Breast epithelium (tissue), 4 donors: ENCODE measurements at regions of chr12 and their contacts with region 1.

Region 1: GRCh38 chr12:95998611-95999286 is 2.6 kb upstream of the HAL start:
- DNase-seq: no peak
- H3K4me3 ChIP-seq: no peak overlapping the region
- H3K27ac ChIP-seq: no peak overlapping the region
- H3K4me1 ChIP-seq: no peaks in the 10 kb centered on the region
- H3K27me3 ChIP-seq: no peaks in the 10 kb centered on the region
- CTCF ChIP-seq: peak; percentile 22 to 65 (median 61)
- POLR2A ChIP-seq: no peak

Region 2: DNA sequence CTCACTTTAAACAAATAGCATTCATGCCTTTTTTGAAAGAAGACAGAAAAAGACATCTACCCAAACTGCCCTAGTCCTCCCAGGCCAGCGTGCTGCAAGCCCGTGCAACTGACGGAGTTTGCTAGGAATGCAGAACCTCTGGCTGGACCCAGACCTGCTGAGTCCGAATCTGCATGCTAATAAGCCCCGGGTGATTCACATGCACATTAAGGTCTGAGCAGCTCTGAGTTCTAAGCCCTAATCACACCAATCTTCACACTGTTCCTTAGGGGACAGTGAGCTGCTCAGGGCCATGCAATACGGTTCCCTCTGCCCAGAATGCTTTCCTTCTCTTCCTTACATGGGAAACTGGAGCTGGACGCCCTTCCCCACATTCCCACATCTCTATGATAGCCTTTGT is 27.8 kb before region 1 on chr12:
- intact Hi-C with region 1: loop called (anchors 2 kb)
- DNase-seq: no peak
- H3K4me3 ChIP-seq: no peak overlapping the region
- H3K27ac ChIP-seq: no peak overlapping the region
- H3K4me1 ChIP-seq: no peaks in the 10 kb centered on the region
- H3K27me3 ChIP-seq: no peaks in the 10 kb centered on the region
- CTCF ChIP-seq: no peak
- POLR2A ChIP-seq: no peak

Region 3: GRCh38 chr12:96035278-96036236 is 36.8 kb after region 1 on chr12 and contains the start of gene LTA4H:
- intact Hi-C with region 1: loop called (anchors 2 kb)
- DNase-seq: peak; percentile 94 to 97
- H3K4me3 ChIP-seq: peak within 1 kb of the TSS; percentile 68 to 85 (median 84)
- H3K27ac ChIP-seq: peak within 1 kb of the TSS; percentile 80 to 81
- H3K4me1 ChIP-seq: no peaks in the 10 kb centered on the region
- H3K27me3 ChIP-seq: no peaks in the 10 kb centered on the region
- CTCF ChIP-seq: peak in 2 of 3 donors; percentile 10 to 22
- POLR2A ChIP-seq: no peak
- total RNA-seq, gene LTA4H: 66.5 to 94.5 (median 67.4) TPM